Heart right ventricle (tissue), 16 donors: ENCODE measurements at regions of chr1 and their contacts with region 1.

Region 1: GRCh38 chr1:1441002-1441888 is 5.8 kb downstream of the VWA1 start:
- DNase-seq: peak in 1 of 2 donors; percentile 72
- ATAC-seq: peak; percentile 68 to 85 (median 77)
- H3K4me3 ChIP-seq: peak overlapping the region in 1 of 10 donors; percentile 21
- H3K27ac ChIP-seq: no peak overlapping the region
- H3K4me1 ChIP-seq: peaks cover 8 to 32% (median 19%) of the 10 kb centered on the region in 9 donors
- H3K27me3 ChIP-seq: peaks cover 0 to 24% (median 4%) of the 10 kb centered on the region in 7 donors
- CTCF ChIP-seq: peak; percentile 80 to 95 (median 90)

Region 2: DNA sequence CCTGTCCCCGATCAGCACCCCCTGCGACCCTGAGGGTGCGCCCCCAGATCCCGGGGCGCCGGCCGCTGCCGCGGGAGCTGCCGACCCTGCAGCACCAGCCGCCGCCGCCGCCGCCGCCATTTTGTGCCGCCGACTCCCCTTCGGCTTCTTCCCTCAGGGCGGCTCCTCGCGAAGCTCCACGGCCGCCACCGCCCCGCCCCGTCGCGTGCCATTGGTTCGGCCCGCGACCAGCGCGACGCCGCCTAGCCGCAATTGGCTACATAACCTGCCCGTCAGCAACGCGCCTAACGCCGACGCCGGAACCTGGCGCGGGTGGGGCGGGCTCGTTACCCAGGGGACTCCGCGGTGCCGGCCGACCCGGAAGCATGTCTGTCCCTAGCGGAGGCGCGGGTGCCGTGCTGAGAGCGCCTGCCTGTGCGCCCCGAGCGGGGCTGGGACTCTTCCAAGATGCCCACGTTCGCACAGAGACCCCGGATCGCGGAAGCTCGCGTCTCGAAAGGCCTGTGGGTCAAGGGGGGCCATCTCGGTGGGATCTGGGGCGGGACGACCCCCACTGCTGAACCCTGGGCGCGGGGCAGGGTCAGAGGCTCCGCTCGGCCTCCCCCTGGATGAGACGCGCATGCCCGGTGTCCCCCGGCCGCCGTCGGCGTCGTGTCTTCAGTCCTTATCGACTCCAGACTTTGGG is 41.9 kb before region 1 on chr1 and contains the start of gene CCNL2:
- intact Hi-C with region 1: loop called in 2 of 10 experiments (anchors 5 kb)
- DNase-seq: peak; percentile 98 to 100
- ATAC-seq: peak; percentile 95 to 99 (median 98)
- H3K4me3 ChIP-seq: peak within 1 kb of the TSS; percentile 80 to 100 (median 96)
- H3K27ac ChIP-seq: peak within 1 kb of the TSS; percentile 83 to 98 (median 92)
- H3K4me1 ChIP-seq: peaks cover 13 to 68% (median 43%) of the 10 kb centered on the region in 9 donors
- H3K27me3 ChIP-seq: no peaks in the 10 kb centered on the region
- CTCF ChIP-seq: peak; percentile 18 to 77 (median 61)
- total RNA-seq, gene CCNL2: 38.5 to 77.5 (median 47.7) TPM

Region 3: GRCh38 chr1:1479547-1480487 is 38.6 kb after region 1 on chr1:
- intact Hi-C with region 1: no loop called
- DNase-seq: no peak
- ATAC-seq: peak in 1 of 8 donors; percentile 12
- H3K4me3 ChIP-seq: no peak overlapping the region
- H3K27ac ChIP-seq: no peak overlapping the region
- H3K4me1 ChIP-seq: no peaks in the 10 kb centered on the region
- H3K27me3 ChIP-seq: no peaks in the 10 kb centered on the region
- CTCF ChIP-seq: no peak

Region 4: GRCh38 chr1:1491601-1492000 is 50.4 kb after region 1 on chr1:
- intact Hi-C with region 1: loop called in 1 of 10 experiments (anchors 2 kb)
- DNase-seq: no peak
- ATAC-seq: no peak
- H3K4me3 ChIP-seq: no peak overlapping the region
- H3K27ac ChIP-seq: no peak overlapping the region
- H3K4me1 ChIP-seq: no peaks in the 10 kb centered on the region
- H3K27me3 ChIP-seq: no peaks in the 10 kb centered on the region
- CTCF ChIP-seq: no peak